ENCODE measurements at regions of chr7 and their contacts with region 1.

Region 1: GRCh38 chr7:129367700-129368388 is 66.4 kb upstream of the STRIP2 start:
- DNase-seq: peak; percentile 88
- ATAC-seq: peak; percentile 84
- H3K4me3 Mint-ChIP-seq: peak overlapping the region; percentile 22
- H3K27ac Mint-ChIP-seq: peak overlapping the region; percentile 52
- H3K4me1 Mint-ChIP-seq: peaks cover 23% of the 10 kb centered on the region
- H3K27me3 Mint-ChIP-seq: no peaks in the 10 kb centered on the region
- CTCF ChIP-seq: peak; percentile 87

Region 2: GRCh38 chr7:129169686-129170440 is 198.0 kb before region 1 on chr7:
- CTCF ChIA-PET with region 1: no interaction called
- POLR2A ChIA-PET with region 1: no interaction called
- intact Hi-C with region 1: no loop called
- DNase-seq: peak; percentile 57
- ATAC-seq: peak; percentile 70
- H3K4me3 Mint-ChIP-seq: peak overlapping the region; percentile 66
- H3K27ac Mint-ChIP-seq: peak overlapping the region; percentile 77
- H3K4me1 Mint-ChIP-seq: peaks cover 17% of the 10 kb centered on the region
- H3K27me3 Mint-ChIP-seq: no peaks in the 10 kb centered on the region
- CTCF ChIP-seq: no peak

Region 3: GRCh38 chr7:129278688-129279087 is 89.2 kb before region 1 on chr7:
- CTCF ChIA-PET with region 1: no interaction called
- POLR2A ChIA-PET with region 1: no interaction called
- intact Hi-C with region 1: no loop called
- DNase-seq: no peak
- ATAC-seq: no peak
- H3K4me3 Mint-ChIP-seq: no peak overlapping the region
- H3K27ac Mint-ChIP-seq: no peak overlapping the region
- H3K4me1 Mint-ChIP-seq: peaks cover 5% of the 10 kb centered on the region
- H3K27me3 Mint-ChIP-seq: no peaks in the 10 kb centered on the region
- CTCF ChIP-seq: no peak

Region 4: DNA sequence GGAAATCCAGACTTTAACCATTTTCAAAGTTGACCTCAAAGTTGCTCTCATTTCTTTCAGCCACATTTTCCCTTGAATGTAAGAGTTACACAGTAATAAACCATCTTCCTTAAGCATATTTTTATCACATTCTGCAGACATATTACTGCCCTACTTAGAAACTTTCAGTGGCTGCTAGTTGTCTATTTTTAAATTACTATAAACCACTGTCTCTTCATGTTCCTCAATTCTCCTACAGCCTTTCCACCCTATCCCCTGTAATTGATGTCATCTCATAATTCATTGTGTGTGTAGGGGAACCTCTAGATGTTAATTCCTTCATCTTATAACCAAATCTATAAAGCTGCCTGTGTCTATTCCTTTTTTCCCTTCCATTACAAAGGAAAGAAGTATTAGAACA is 11.7 kb before region 1 on chr7:
- CTCF ChIA-PET with region 1: interaction called, 71 read pairs
- POLR2A ChIA-PET with region 1: no interaction called
- intact Hi-C with region 1: no loop called
- DNase-seq: no peak
- ATAC-seq: no peak
- H3K4me3 Mint-ChIP-seq: no peak overlapping the region
- H3K27ac Mint-ChIP-seq: no peak overlapping the region
- H3K4me1 Mint-ChIP-seq: peaks cover 5% of the 10 kb centered on the region
- H3K27me3 Mint-ChIP-seq: no peaks in the 10 kb centered on the region
- CTCF ChIP-seq: no peak

Region 5: DNA sequence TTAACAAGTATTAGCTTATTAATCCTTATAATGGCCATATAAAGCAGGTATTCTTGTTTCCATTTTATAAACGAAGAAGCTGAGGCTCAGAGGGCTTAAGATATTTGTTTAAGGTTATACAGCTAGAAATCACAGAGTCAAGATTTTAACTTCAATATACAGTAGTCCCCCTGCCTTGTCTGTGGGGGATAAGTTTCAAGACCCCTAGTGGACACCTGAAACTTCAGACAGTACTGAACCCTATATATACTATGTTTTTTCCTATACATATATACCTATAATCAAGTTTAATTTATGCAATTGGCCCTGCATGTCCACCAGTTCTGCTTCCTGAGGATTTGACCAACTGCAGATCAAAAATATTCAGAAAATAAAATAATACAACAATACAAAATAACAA is 22.0 kb after region 1 on chr7:
- CTCF ChIA-PET with region 1: interaction called, 27 read pairs
- POLR2A ChIA-PET with region 1: no interaction called
- intact Hi-C with region 1: no loop called
- DNase-seq: no peak
- ATAC-seq: no peak
- H3K4me3 Mint-ChIP-seq: no peak overlapping the region
- H3K27ac Mint-ChIP-seq: no peak overlapping the region
- H3K4me1 Mint-ChIP-seq: peaks cover 4% of the 10 kb centered on the region
- H3K27me3 Mint-ChIP-seq: no peaks in the 10 kb centered on the region
- CTCF ChIP-seq: no peak

Region 6: GRCh38 chr7:129433847-129434674 is 66.2 kb after region 1 on chr7 and contains the start of gene STRIP2:
- CTCF ChIA-PET with region 1: interaction called, 17 read pairs
- POLR2A ChIA-PET with region 1: interaction called, 3 read pairs
- intact Hi-C with region 1: no loop called
- DNase-seq: peak; percentile 95
- ATAC-seq: peak; percentile 89
- H3K4me3 Mint-ChIP-seq: peak within 1 kb of the TSS; percentile 75
- H3K27ac Mint-ChIP-seq: peak within 1 kb of the TSS; percentile 76
- H3K4me1 Mint-ChIP-seq: peaks cover 33% of the 10 kb centered on the region
- H3K27me3 Mint-ChIP-seq: peaks cover 24% of the 10 kb centered on the region
- CTCF ChIP-seq: peak; percentile 5
- total RNA-seq, gene STRIP2: 12.2 to 13.1 TPM

Region 7: DNA sequence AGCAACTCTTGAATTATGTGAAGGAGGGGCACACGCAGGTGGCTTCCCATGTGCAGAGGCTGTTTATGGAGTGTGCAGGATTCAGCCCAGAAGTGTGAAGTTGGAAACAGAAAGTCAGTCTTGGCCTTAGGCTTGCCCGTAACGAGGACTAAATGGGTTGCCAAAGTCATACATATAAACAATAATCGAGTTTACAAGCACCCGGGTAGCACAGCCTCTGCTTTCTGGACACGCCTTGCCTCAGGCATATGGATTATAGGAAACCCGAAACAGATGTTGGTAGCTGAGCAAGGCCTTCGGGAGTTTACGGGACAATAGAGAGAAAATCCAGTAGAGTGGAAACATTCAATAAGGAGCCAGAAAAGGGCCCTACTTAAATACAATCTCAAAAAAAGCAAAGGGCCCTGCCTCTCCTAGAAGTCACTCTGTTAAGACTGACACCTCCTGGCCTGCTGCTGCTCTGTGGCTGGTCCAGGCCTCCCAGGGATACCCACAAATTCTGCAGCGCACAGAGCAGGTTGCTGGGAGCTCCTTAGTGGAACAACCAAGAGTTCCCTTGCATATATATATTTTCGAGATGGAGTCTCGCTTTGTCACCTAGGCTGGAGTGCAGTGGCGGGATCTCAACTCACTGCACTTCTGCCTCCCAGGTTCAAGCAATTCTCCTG is 183.0 kb after region 1 on chr7:
- CTCF ChIA-PET with region 1: no interaction called
- POLR2A ChIA-PET with region 1: no interaction called
- intact Hi-C with region 1: no loop called
- DNase-seq: no peak
- ATAC-seq: no peak
- H3K4me3 Mint-ChIP-seq: no peak overlapping the region
- H3K27ac Mint-ChIP-seq: no peak overlapping the region
- H3K4me1 Mint-ChIP-seq: peaks cover 6% of the 10 kb centered on the region
- H3K27me3 Mint-ChIP-seq: no peaks in the 10 kb centered on the region
- CTCF ChIP-seq: no peak

Region 8: DNA sequence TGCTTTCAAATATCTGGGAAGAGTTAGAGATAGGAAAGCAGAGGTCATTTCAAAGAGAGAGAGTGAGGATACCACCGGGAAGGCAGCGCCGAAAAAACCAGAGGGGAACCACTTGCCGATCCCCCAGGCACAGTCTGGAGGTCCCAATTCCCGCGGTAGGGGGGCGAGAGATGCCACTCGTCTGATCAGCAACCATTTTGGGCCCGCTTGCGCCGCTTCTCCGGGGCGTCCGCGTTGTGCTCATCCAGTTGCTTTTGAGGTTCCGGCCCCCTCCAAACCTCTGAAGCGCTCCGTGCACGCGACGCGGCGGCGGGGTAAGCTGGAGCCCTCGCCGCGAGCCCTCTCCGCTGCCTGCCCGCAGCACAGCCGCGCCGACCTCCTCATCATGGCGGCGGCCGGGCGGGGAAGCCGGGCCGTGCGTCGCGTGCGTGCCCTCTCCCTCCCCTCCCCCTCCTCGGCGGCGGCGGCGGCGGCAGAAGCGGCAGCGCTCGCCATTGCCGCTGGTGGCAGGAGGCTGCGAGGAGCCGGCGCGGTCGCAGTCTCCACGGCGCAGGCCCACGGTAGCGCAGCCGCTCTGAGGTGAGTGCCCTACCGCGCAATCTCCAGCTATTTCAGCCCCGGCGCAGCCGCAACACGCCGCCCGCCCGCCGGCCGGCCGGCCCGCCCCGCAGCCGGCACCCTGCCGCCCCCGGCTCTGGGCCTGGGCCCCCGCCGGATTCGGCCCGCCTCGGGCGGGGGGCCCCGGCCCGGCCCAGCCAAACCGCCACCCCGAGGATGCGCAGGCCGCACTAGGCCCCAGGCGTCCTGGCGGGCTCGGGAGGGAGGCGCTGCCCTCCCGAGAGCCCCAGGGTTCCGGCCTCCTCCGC is 243.6 kb after region 1 on chr7 and contains the start of gene NRF1:
- CTCF ChIA-PET with region 1: interaction called, 10 read pairs
- POLR2A ChIA-PET with region 1: no interaction called
- intact Hi-C with region 1: no loop called
- DNase-seq: peak; percentile 90
- ATAC-seq: peak; percentile 85
- H3K4me3 Mint-ChIP-seq: peak within 1 kb of the TSS; percentile 96
- H3K27ac Mint-ChIP-seq: peak within 1 kb of the TSS; percentile 99
- H3K4me1 Mint-ChIP-seq: peaks cover 62% of the 10 kb centered on the region
- H3K27me3 Mint-ChIP-seq: no peaks in the 10 kb centered on the region
- CTCF ChIP-seq: no peak
- total RNA-seq, gene NRF1: 23.3 to 23.9 TPM

Region 9: DNA sequence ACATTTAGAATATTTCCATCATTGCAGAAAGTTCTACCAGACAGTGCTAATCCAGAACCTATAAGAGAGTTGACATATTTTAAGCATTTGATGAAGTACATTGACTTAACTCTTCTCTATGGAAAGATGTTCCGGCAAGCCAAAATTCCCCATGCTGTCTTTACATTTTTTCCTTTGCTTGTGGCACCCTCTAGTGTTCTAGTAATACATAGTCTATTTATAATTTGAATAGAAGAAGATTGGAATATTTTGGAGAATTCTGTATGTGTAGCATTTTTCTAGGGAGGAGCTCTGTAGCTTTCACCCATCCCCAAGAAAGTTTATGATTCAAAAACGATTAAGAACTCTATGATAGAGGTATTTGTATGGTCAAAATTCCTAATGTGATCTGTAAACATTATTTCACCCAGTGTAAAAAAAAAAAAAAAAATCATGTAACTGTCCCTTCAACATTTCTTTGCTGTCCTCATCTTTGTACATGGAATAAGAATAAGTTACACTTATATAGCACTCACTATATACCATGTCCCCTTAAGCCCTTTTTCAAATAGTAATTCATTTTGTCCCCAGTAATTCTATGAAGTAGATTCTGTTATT is 276.9 kb after region 1 on chr7:
- CTCF ChIA-PET with region 1: interaction called, 10 read pairs
- POLR2A ChIA-PET with region 1: no interaction called
- intact Hi-C with region 1: loop called (anchors 10 kb)
- DNase-seq: no peak
- ATAC-seq: no peak
- H3K4me3 Mint-ChIP-seq: no peak overlapping the region
- H3K27ac Mint-ChIP-seq: no peak overlapping the region
- H3K4me1 Mint-ChIP-seq: peaks cover 35% of the 10 kb centered on the region
- H3K27me3 Mint-ChIP-seq: no peaks in the 10 kb centered on the region
- CTCF ChIP-seq: peak; percentile 58